ENCODE measurements at regions of chr14 and their contacts with region 1.

Region 1: GRCh38 chr14:36207500-36207899 is 31.0 kb upstream of the PTCSC3 start:
- DNase-seq: no peak
- ATAC-seq: peak; percentile 83

Region 2: DNA sequence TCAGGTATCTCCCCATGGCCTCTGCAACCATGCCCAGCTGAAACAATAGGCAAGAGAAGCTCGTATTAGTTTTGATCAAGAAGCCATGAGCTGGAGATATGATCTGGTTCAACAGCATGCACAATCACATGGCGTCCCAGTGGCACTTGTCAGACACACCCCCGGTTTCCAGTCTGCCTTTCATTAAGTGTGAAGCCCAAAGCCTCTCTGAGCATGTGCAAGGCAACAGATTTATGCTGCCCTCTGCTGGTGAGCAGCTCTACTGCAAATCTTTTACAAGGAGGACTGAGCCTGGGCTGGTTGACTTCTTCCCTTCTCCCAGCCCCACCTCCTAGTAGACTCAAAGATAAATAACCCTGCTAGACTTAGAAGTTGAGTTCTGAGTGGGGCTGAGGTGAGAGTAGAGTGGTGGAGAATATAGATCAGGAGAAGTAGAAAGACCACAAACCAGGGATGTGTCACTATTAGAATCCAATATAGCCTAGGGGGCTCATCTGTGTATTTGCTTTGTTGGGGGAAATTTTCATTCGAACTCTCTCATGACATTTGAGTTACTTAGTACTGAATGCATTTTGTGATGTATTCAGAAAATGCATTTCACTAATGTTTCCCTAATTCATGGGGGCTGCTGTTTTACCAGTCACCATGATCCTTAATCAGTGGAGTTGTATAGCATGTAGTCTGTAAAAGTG is 166.6 kb after region 1 on chr14:
- intact Hi-C with region 1: loop called in 1 of 2 experiments (anchors 10 kb)
- DNase-seq: peak; percentile 58 to 87
- ATAC-seq: peak; percentile 99

Measured in left colon (tissue), 2 donors.